Activated CD4-positive, alpha-beta T cell treated with anti-CD3 and anti-CD28 coated beads for 36 hours (primary cell): ENCODE measurements at regions of chr1 and their contacts with region 1.

Region 1: DNA sequence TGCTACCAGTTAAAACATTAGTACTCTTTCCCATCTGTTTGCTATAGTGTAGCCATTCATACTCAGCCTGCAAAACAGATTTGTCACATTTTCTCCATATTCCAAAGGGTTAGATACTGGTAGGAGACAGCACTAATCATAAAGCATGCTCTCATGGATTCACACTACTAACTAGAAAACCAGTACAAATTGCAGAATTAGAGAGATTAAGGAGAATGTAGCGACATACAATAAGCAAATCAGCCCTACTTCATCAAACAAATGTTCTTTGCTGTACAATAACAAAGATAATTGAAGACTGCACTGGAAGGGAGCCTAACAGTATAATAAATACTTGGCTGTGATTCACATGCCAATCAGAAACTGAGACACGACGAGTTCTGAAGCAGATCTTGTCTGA is 368.0 kb upstream of the PRMT6 start:
- DNase-seq: no peak
- ATAC-seq: no peak
- H3K4me3 Mint-ChIP-seq: no peak overlapping the region
- H3K27ac Mint-ChIP-seq: no peak overlapping the region
- H3K4me1 Mint-ChIP-seq: no peaks in the 10 kb centered on the region
- H3K27me3 Mint-ChIP-seq: no peaks in the 10 kb centered on the region

Region 2: DNA sequence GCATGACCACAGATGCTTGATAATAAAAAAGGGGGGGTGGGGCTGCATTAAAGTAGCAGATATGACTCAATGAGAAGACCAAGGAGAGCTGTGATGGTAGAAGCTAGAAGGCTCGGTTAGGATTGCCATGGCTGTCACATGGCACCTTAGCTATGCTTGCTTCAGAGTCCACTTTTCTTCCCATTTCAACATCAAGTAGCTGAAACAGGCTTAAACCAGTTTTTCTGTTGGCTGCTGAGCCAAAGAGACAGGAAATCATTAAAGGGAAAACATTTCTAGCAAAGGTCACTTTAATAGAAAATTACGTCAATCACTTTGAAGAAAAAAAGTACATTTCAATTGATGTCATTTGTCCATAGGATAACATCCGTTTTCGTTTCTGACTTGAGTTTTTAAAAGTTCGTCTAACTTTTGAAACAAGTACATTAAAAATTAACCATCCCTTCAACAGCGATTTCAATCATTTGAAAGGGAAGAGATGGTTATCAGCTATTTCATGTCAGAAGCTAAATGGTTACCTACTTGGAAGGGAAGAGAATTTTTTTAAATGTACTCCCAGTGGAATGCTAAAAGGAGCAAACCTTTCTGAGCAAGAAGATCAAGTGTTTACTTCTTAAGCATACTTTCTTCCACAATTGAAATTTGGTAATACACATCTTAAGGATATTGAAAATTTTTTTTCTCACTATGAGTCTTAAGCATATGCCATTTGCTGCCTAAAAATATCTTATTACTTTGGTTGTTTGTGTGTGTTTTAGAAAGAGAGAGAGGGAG is 120.1 kb before region 1 on chr1:
- CTCF ChIA-PET with region 1: no interaction called
- POLR2A ChIA-PET with region 1: no interaction called
- intact Hi-C with region 1: no loop called
- DNase-seq: no peak
- ATAC-seq: no peak
- H3K4me3 Mint-ChIP-seq: no peak overlapping the region
- H3K27ac Mint-ChIP-seq: no peak overlapping the region
- H3K4me1 Mint-ChIP-seq: no peaks in the 10 kb centered on the region
- H3K27me3 Mint-ChIP-seq: no peaks in the 10 kb centered on the region

Region 3: DNA sequence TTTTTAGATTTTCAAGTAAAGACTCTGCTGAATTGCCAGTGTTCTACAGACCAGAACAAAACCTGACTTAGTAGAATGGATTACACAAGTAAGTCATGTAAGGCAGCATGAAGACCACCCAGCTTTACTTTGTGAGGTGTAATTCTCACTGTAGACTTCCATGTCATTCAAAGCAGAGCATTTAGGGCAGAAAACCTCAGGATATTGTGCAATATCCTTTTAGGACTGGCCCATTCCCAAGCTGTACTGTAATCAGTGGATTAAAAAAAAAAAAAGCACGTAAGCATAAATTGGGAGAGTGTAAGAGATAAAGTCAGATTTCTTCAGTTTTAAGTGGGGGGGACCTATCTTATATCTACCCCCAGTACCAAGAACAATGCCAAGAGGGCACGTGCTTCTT is 12.4 kb before region 1 on chr1:
- CTCF ChIA-PET with region 1: no interaction called
- POLR2A ChIA-PET with region 1: no interaction called
- intact Hi-C with region 1: no loop called
- DNase-seq: no peak
- ATAC-seq: no peak
- H3K4me3 Mint-ChIP-seq: no peak overlapping the region
- H3K27ac Mint-ChIP-seq: no peak overlapping the region
- H3K4me1 Mint-ChIP-seq: no peaks in the 10 kb centered on the region
- H3K27me3 Mint-ChIP-seq: no peaks in the 10 kb centered on the region

Region 4: GRCh38 chr1:106705971-106706370 is 17.5 kb after region 1 on chr1:
- CTCF ChIA-PET with region 1: no interaction called
- POLR2A ChIA-PET with region 1: no interaction called
- intact Hi-C with region 1: no loop called
- DNase-seq: no peak
- ATAC-seq: no peak
- H3K4me3 Mint-ChIP-seq: no peak overlapping the region
- H3K27ac Mint-ChIP-seq: no peak overlapping the region
- H3K4me1 Mint-ChIP-seq: no peaks in the 10 kb centered on the region
- H3K27me3 Mint-ChIP-seq: no peaks in the 10 kb centered on the region

Region 5: GRCh38 chr1:106740325-106740724 is 51.9 kb after region 1 on chr1:
- CTCF ChIA-PET with region 1: no interaction called
- POLR2A ChIA-PET with region 1: no interaction called
- intact Hi-C with region 1: loop called in 1 of 2 experiments (anchors 5 kb)
- DNase-seq: no peak
- ATAC-seq: no peak
- H3K4me3 Mint-ChIP-seq: no peak overlapping the region
- H3K27ac Mint-ChIP-seq: no peak overlapping the region
- H3K4me1 Mint-ChIP-seq: no peaks in the 10 kb centered on the region
- H3K27me3 Mint-ChIP-seq: no peaks in the 10 kb centered on the region